ENCODE measurements at regions of chr6 and their contacts with region 1.

Region 1: DNA sequence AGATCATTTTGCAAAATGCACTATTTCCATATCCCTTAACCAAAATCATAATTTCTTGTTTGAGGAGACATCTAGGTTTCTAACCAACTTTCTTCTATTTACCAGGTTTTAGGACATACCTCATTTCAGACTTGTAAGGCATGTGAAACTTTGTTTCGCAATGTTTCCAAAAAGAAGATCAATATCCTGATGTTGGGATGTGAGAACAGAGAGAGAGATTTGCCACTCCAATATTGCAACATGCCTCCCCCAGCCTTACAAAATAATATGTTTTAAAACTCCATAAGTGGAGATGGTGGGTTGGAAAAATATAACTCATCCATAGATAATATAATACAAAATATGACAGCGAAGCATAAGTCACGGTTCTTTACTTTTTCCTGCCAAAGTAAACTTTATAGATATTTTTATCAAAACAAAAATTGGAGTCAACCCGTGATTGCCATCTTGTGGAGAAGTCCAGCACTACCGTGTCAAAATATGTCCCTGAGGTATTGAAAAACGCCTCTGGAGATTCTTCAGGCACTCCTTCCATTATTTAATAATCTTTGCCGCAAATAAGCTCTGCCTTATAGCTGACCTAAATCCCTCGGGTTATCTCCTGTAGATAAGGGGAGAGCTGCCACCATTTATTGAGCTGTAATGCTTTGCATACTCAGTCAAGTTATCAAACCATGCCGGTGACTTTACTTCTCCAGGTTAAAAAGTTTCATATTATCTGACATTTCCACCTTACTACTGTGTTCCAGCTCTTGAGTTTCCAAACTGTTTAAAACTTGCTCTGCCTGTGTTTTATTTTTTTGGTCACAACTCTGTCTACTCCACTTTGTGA is 534.2 kb downstream of the HACE1 start:
- DNase-seq: no peak
- ATAC-seq: no peak
- H3K4me3 ChIP-seq: no peak overlapping the region
- H3K27ac ChIP-seq: no peak overlapping the region
- H3K4me1 ChIP-seq: no peaks in the 10 kb centered on the region
- H3K27me3 ChIP-seq: no peaks in the 10 kb centered on the region
- CTCF ChIP-seq: peak; percentile 80

Region 2: GRCh38 chr6:103797738-103798137 is 527.8 kb before region 1 on chr6:
- CTCF ChIA-PET with region 1: no interaction called
- POLR2A ChIA-PET with region 1: no interaction called
- in situ Hi-C with region 1: no loop called
- intact Hi-C with region 1: loop called (anchors 10 kb)
- DNase-seq: no peak
- ATAC-seq: no peak
- H3K4me3 ChIP-seq: no peak overlapping the region
- H3K27ac ChIP-seq: no peak overlapping the region
- H3K4me1 ChIP-seq: no peaks in the 10 kb centered on the region
- H3K27me3 ChIP-seq: no peaks in the 10 kb centered on the region
- CTCF ChIP-seq: peak; percentile 35; the same call in 1 of the 2 replicates

Region 3: GRCh38 chr6:104754788-104755409 is 429.3 kb after region 1 on chr6:
- CTCF ChIA-PET with region 1: no interaction called
- POLR2A ChIA-PET with region 1: no interaction called
- in situ Hi-C with region 1: no loop called
- intact Hi-C with region 1: no loop called
- DNase-seq: no peak
- ATAC-seq: no peak
- H3K4me3 ChIP-seq: no peak overlapping the region
- H3K27ac ChIP-seq: no peak overlapping the region
- H3K4me1 ChIP-seq: no peaks in the 10 kb centered on the region
- H3K27me3 ChIP-seq: no peaks in the 10 kb centered on the region
- CTCF ChIP-seq: no peak

Measured in Panc1 (cell line).